A549 (cell line): ENCODE measurements at regions of chr9 and their contacts with region 1.

Region 1: DNA sequence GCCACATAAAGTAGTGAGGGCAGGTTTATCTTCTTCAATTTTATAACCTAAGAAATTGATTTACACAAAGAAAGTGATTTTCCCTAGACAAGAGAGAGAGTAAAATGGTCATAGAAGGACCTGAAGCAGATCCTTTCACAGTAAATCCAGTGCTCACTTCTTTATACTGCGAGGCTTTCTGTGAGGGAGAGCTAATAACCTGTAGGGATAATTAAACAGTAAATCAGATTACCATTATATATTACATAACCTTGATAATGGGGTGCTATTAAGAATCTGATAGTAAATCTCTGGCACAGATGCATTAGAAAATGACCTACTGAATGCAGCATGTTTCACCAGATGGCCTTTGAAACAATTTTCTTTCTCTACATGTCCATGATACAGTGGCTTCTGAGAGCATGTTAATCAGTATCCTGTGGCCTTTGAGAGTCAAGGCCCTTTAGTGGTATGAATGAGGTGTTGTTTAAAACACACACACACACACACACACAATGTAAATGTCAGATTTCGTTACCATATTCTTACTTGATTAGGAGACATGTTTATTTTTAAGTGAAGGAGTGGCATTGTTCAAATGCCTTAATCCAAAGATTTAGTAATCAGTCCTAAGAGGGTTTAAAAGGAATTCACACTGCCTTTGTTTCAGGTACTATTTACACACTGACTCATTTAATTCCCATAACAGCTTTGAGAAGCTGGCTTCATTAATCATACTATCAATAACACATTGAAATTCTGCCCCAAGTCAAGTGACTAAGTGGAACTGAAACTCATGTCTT is 124.7 kb downstream of the ALDH1A1 start:
- DNase-seq: peak; percentile 44 to 86
- ATAC-seq: peak; percentile 82 to 84
- H3K4me3 ChIP-seq: no peak overlapping the region
- H3K27ac ChIP-seq: peak overlapping the region; percentile 77 to 87
- H3K4me1 ChIP-seq: peaks cover 47% of the 10 kb centered on the region
- CTCF ChIP-seq: no peak
- EP300 ChIP-seq: peak; percentile 70 to 84; a peak in 3 of 5 replicates
- POLR2A ChIP-seq: no peak
- RAD21 ChIP-seq: peak in 1 of 2 experiments; percentile 14; a peak in 1 of 5 replicates

Region 2: GRCh38 chr9:72794947-72795346 is 33.2 kb before region 1 on chr9:
- CTCF ChIA-PET with region 1: interaction called, 13 read pairs
- POLR2A ChIA-PET with region 1: no interaction called
- DNase-seq: peak in 1 of 2 experiments; percentile 28
- ATAC-seq: 0 out of 6 replicates have a peak, but pooled peaks of 1 of the 2 experiments have one; percentile 34
- H3K4me3 ChIP-seq: no peak overlapping the region
- H3K27ac ChIP-seq: peak overlapping the region; percentile 0 to 12; a peak in 2 of 6 replicates
- H3K4me1 ChIP-seq: peaks cover 13% of the 10 kb centered on the region
- CTCF ChIP-seq: no peak
- EP300 ChIP-seq: no peak
- POLR2A ChIP-seq: no peak
- RAD21 ChIP-seq: no peak

Region 3: GRCh38 chr9:72800328-72800994 is 27.7 kb before region 1 on chr9:
- CTCF ChIA-PET with region 1: interaction called, 13 read pairs
- POLR2A ChIA-PET with region 1: no interaction called
- DNase-seq: no peak
- ATAC-seq: no peak
- H3K4me3 ChIP-seq: no peak overlapping the region
- H3K27ac ChIP-seq: no peak overlapping the region
- H3K4me1 ChIP-seq: peaks cover 2% of the 10 kb centered on the region; the same call in 2 of the 3 replicates
- CTCF ChIP-seq: no peak
- EP300 ChIP-seq: no peak
- POLR2A ChIP-seq: no peak
- RAD21 ChIP-seq: no peak

Region 4: DNA sequence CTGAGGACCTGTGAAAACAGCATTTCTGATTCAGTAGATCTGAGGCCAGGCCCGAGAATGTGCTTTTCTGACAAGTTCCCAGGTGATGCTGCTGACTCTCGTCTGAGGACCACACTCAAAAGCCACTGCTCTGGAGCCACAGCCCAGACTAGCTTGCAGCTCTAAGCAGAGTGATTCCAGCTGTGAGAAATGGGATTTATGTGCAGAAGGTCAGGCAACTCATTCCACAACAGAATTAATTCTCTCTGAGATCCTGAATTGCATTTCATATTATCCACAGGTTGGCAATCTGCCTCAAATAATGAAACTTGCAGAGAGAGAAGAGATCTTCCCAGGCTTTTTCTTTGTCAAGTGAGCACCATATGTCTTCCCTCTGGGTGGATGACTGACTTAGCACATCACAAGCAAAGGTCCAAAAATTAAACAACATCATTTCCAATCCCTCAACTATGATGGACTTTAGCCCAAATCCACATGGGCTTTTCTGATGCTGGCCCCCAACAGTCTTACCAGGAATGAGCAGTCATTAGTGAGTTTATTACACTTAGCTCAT is 15.5 kb before region 1 on chr9:
- CTCF ChIA-PET with region 1: interaction called, 22 read pairs
- POLR2A ChIA-PET with region 1: no interaction called
- DNase-seq: no peak
- ATAC-seq: no peak
- H3K4me3 ChIP-seq: no peak overlapping the region
- H3K27ac ChIP-seq: no peak overlapping the region
- H3K4me1 ChIP-seq: 0 out of 3 replicates have a peak, but pooled peaks cover 4% of the 10 kb centered on the region
- CTCF ChIP-seq: no peak
- EP300 ChIP-seq: no peak
- POLR2A ChIP-seq: no peak
- RAD21 ChIP-seq: no peak

Region 5: DNA sequence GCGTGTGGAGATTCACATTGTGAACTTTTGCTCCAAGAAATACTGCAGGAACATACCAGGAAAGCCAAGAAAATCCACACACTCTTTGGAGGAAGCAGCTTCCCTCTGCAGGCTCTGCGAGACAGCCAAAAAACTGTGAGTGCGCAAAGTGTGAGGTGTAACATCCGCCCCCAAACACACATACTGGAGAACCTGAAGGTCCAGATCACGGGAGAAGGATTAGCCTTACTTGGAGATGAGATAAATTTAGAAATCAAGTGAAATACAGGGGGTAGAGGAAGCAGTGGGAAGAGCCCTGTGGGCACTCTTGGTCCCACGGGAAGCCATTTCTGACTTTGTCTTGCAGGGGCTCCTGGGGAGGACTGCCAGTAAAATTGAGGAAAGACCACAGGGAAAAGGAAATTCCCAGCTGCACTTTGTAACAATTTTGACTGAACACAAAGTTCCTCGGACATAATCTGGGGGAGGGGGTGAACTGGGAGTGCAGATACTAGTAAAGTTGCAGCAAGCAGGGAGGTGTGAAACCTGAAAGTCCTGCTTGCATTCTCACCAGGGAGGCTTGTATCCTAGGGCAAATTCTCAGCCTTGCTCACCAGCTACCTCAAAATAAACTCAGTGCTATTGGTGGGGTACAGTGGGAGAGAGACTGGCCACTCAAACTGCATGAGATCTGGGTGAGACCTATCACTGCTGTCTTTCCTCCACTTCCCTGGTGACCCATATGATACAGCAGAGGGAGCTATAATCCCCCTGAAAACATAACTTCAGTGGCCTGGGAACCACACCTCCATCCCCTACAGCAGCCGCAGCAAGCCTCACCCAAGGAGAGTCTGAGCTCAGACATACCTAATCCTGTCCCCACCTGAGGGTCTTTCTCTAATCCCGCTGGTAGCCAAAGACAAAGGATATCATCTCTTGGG is 15.6 kb after region 1 on chr9:
- CTCF ChIA-PET with region 1: interaction called, 16 read pairs
- POLR2A ChIA-PET with region 1: no interaction called
- DNase-seq: peak; percentile 47 to 77
- ATAC-seq: peak; percentile 98
- H3K4me3 ChIP-seq: no peak overlapping the region
- H3K27ac ChIP-seq: peak overlapping the region; percentile 65 to 74
- H3K4me1 ChIP-seq: peaks cover 18% of the 10 kb centered on the region
- CTCF ChIP-seq: peak; percentile 31; the same call in 1 of the 3 replicates
- EP300 ChIP-seq: no peak
- POLR2A ChIP-seq: no peak
- RAD21 ChIP-seq: peak; percentile 47 to 77; a peak in 4 of 5 replicates

Region 6: GRCh38 chr9:72917892-72918509 is 89.9 kb after region 1 on chr9:
- CTCF ChIA-PET with region 1: no interaction called
- POLR2A ChIA-PET with region 1: no interaction called
- DNase-seq: no peak
- ATAC-seq: no peak
- H3K4me3 ChIP-seq: peak overlapping the region; percentile 18; the same call in 2 of the 3 replicates
- H3K27ac ChIP-seq: peak overlapping the region; percentile 72 to 75
- H3K4me1 ChIP-seq: peaks cover 100% of the 10 kb centered on the region
- CTCF ChIP-seq: no peak
- EP300 ChIP-seq: no peak
- POLR2A ChIP-seq: no peak
- RAD21 ChIP-seq: no peak

Region 7: GRCh38 chr9:72947984-72948465 is 119.9 kb after region 1 on chr9:
- CTCF ChIA-PET with region 1: no interaction called
- POLR2A ChIA-PET with region 1: no interaction called
- DNase-seq: peak in 1 of 2 experiments; percentile 72
- ATAC-seq: peak in 1 of 2 experiments; percentile 8; a peak in 3 of 6 replicates
- H3K4me3 ChIP-seq: peak overlapping the region; percentile 67
- H3K27ac ChIP-seq: peak overlapping the region; percentile 90 to 91
- H3K4me1 ChIP-seq: peaks cover 15% of the 10 kb centered on the region; the same call in 2 of the 3 replicates
- CTCF ChIP-seq: no peak
- EP300 ChIP-seq: no peak
- POLR2A ChIP-seq: no peak
- RAD21 ChIP-seq: no peak; a peak in 1 of 5 replicates